A673 (cell line): ENCODE measurements at regions of chr7 and their contacts with region 1.

Region 1: GRCh38 chr7:146892151-146892550 is 775.5 kb downstream of the CNTNAP2 start:
- DNase-seq: peak; percentile 25
- H3K4me3 ChIP-seq: no peak overlapping the region
- H3K27ac ChIP-seq: no peak overlapping the region
- H3K4me1 ChIP-seq: peaks cover 4% of the 10 kb centered on the region
- H3K27me3 ChIP-seq: no peaks in the 10 kb centered on the region
- CTCF ChIP-seq: no peak

Region 2: GRCh38 chr7:146948703-146949102 is 56.6 kb after region 1 on chr7:
- CTCF ChIA-PET with region 1: no interaction called
- POLR2A ChIA-PET with region 1: no interaction called
- intact Hi-C with region 1: loop called (anchors 10 kb)
- DNase-seq: no peak
- H3K4me3 ChIP-seq: no peak overlapping the region
- H3K27ac ChIP-seq: no peak overlapping the region
- H3K4me1 ChIP-seq: peaks cover 23% of the 10 kb centered on the region
- H3K27me3 ChIP-seq: no peaks in the 10 kb centered on the region
- CTCF ChIP-seq: no peak

Region 3: GRCh38 chr7:147509035-147509501 is 616.9 kb after region 1 on chr7:
- CTCF ChIA-PET with region 1: no interaction called
- POLR2A ChIA-PET with region 1: no interaction called
- intact Hi-C with region 1: no loop called
- DNase-seq: peak; percentile 22
- H3K4me3 ChIP-seq: no peak overlapping the region
- H3K27ac ChIP-seq: peak overlapping the region; percentile 51
- H3K4me1 ChIP-seq: peaks cover 10% of the 10 kb centered on the region
- H3K27me3 ChIP-seq: no peaks in the 10 kb centered on the region
- CTCF ChIP-seq: no peak